Activated CD4-positive, alpha-beta memory T cell treated with anti-CD3 and anti-CD28 coated beads, Interleukin-2, amount 10 ng/mL, durations not matched to agents 7 days and 5 days (primary cell): ENCODE measurements at regions of chr10 and their contacts with region 1.

Region 1: GRCh38 chr10:63145782-63146181 is 12.7 kb downstream of the NRBF2 start:
- DNase-seq: no peak
- H3K4me3 Mint-ChIP-seq: no peak overlapping the region
- H3K27ac Mint-ChIP-seq: no peak overlapping the region
- H3K4me1 Mint-ChIP-seq: peaks cover 30% of the 10 kb centered on the region
- H3K27me3 Mint-ChIP-seq: no peaks in the 10 kb centered on the region

Region 2: DNA sequence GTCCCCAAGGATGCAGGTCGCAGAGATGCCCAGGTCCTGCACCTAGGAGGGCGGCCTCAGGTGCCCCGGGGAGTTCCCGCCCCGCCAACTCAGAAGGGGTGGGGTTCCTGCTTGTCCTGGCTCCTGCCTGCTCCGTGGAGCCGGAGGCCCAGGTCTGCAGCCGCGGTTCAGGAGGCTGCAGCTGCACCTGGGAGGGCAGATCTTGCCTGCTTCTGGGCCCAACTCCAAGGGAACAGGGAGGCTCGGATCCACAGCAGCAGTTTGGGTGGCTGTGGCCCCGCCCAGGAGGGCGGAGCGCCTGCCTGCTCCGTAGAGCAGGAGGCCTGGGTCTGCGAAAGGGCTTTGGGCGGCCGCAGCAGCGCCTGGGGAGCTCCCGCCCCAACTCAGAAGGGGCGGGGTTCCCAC is 221.4 kb before region 1 on chr10:
- CTCF ChIA-PET with region 1: no interaction called
- POLR2A ChIA-PET with region 1: no interaction called
- DNase-seq: no peak
- H3K4me3 Mint-ChIP-seq: no peak overlapping the region
- H3K27ac Mint-ChIP-seq: no peak overlapping the region
- H3K4me1 Mint-ChIP-seq: no peaks in the 10 kb centered on the region
- H3K27me3 Mint-ChIP-seq: peaks cover 2% of the 10 kb centered on the region

Region 3: GRCh38 chr10:62972103-62972502 is 173.7 kb before region 1 on chr10:
- CTCF ChIA-PET with region 1: no interaction called
- POLR2A ChIA-PET with region 1: no interaction called
- DNase-seq: no peak
- H3K4me3 Mint-ChIP-seq: no peak overlapping the region
- H3K27ac Mint-ChIP-seq: no peak overlapping the region
- H3K4me1 Mint-ChIP-seq: no peaks in the 10 kb centered on the region
- H3K27me3 Mint-ChIP-seq: peaks cover 4% of the 10 kb centered on the region

Region 4: GRCh38 chr10:63133056-63133820 is 12.5 kb before region 1 on chr10 and contains the start of gene NRBF2:
- CTCF ChIA-PET with region 1: interaction called, 7 read pairs
- POLR2A ChIA-PET with region 1: interaction called, 33 read pairs
- DNase-seq: peak; percentile 98
- H3K4me3 Mint-ChIP-seq: peak within 1 kb of the TSS; percentile 91
- H3K27ac Mint-ChIP-seq: peak within 1 kb of the TSS; percentile 95
- H3K4me1 Mint-ChIP-seq: peaks cover 35% of the 10 kb centered on the region
- H3K27me3 Mint-ChIP-seq: no peaks in the 10 kb centered on the region
- total RNA-seq, gene NRBF2: 25.1 to 26.8 TPM